IMR-90 (cell line): ENCODE measurements at regions of chr9 and their contacts with region 1.

Region 1: DNA sequence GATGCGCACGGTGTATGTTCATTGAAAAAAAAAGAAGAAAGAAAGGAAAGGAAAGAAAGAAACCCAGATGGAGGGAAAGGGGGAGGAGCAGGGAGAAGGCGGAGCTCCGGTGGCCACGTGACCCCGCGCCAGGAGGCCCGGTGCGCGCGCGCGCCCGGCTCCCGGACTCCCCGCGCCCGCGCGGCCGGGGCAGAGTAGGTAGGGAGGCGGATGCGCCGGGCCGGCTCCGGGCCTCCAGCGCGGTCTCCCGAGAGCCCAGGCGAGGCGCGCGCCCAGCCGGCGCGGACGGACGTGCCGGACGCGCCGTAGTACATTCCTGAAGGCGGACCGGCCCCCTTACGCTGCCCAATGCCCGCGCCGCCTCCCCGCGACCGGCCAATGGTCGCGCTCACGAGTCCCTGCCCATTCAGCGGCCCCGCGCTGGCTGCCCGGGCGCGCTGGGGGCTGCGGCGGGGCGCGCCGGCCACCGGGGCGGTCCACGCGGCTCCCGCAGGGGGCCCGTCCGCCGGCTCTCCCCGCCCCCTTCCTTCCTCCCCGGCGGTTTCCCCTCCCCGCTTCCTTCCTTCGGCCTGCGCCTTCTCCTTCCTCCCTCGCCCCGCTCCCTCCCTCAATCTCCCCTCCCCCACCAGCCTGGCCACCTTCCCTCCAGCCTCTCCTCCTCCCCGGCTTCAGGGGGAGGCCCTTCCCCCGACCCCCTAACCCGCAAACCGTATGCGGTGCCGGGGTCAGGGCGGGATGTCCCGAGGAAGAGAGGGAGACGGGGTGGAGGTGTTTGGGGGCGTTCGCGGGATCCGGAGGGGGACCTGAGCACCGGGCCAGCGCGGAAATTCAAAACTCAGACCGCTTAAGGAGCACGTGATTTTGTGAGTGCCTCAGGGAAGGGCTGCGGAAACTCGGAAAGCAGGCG is 5.8 kb downstream of the PTCH1 start:
- DNase-seq: peak; percentile 97
- ATAC-seq: peak; percentile 77
- H3K4me3 ChIP-seq: peak overlapping the region; percentile 84
- H3K27ac ChIP-seq: peak overlapping the region; percentile 99
- H3K4me1 ChIP-seq: peaks cover 4% of the 10 kb centered on the region
- H3K27me3 ChIP-seq: no peaks in the 10 kb centered on the region; the same call in 1 of the 2 replicates
- CTCF ChIP-seq: no peak
- POLR2A ChIP-seq: peak; percentile 28; the same call in 1 of the 2 replicates
- RAD21 ChIP-seq: no peak

Region 2: DNA sequence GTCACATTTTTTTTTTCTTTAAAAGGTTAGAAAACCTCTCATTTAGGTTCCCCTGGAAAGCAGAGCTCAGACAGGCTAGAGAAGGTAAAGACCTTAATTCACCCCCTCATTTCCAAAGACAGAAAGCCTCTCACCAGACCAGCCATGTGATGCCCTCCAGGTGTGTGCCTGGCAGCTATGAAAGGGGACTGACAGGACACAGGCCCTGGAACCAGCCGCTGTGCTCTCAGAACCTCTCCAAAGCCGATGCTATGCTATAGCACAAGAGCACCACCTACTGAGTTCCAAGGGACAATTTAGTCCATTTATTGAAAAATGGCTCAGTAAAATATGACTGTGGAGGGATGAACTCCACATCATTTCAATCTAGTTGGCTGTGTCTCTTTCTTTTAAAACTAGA is 242.3 kb before region 1 on chr9:
- CTCF ChIA-PET with region 1: no interaction called
- POLR2A ChIA-PET with region 1: interaction called, 3 read pairs
- dilution Hi-C with region 1: no loop called
- in situ Hi-C with region 1: no loop called
- intact Hi-C with region 1: loop called (anchors 1 kb)
- DNase-seq: peak; percentile 41
- ATAC-seq: peak; percentile 69
- H3K4me3 ChIP-seq: no peak overlapping the region
- H3K27ac ChIP-seq: no peak overlapping the region
- H3K4me1 ChIP-seq: peaks cover 4% of the 10 kb centered on the region; the same call in 1 of the 2 replicates
- H3K27me3 ChIP-seq: no peaks in the 10 kb centered on the region
- CTCF ChIP-seq: peak; percentile 49
- POLR2A ChIP-seq: no peak
- RAD21 ChIP-seq: peak; percentile 50

Region 3: GRCh38 chr9:95383185-95383673 is 127.7 kb before region 1 on chr9:
- CTCF ChIA-PET with region 1: interaction called, 3 read pairs
- POLR2A ChIA-PET with region 1: no interaction called
- dilution Hi-C with region 1: no loop called
- in situ Hi-C with region 1: no loop called
- intact Hi-C with region 1: loop called (anchors 5 kb)
- DNase-seq: peak; percentile 85
- ATAC-seq: peak; percentile 77
- H3K4me3 ChIP-seq: no peak overlapping the region
- H3K27ac ChIP-seq: peak overlapping the region; percentile 74
- H3K4me1 ChIP-seq: peaks cover 17% of the 10 kb centered on the region
- H3K27me3 ChIP-seq: no peaks in the 10 kb centered on the region
- CTCF ChIP-seq: no peak
- POLR2A ChIP-seq: no peak
- RAD21 ChIP-seq: no peak

Region 4: GRCh38 chr9:95726756-95727155 is 215.8 kb after region 1 on chr9:
- CTCF ChIA-PET with region 1: no interaction called
- POLR2A ChIA-PET with region 1: interaction called, 20 read pairs
- dilution Hi-C with region 1: no loop called
- in situ Hi-C with region 1: no loop called
- intact Hi-C with region 1: loop called (anchors 5 kb)
- DNase-seq: peak; percentile 59
- ATAC-seq: peak; percentile 89
- H3K4me3 ChIP-seq: no peak overlapping the region
- H3K27ac ChIP-seq: no peak overlapping the region
- H3K4me1 ChIP-seq: peaks cover 2% of the 10 kb centered on the region; the same call in 1 of the 2 replicates
- H3K27me3 ChIP-seq: peaks cover 15% of the 10 kb centered on the region
- CTCF ChIP-seq: peak; percentile 69
- POLR2A ChIP-seq: no peak
- RAD21 ChIP-seq: peak; percentile 74

Region 5: GRCh38 chr9:95981761-95982390 is 470.9 kb after region 1 on chr9:
- CTCF ChIA-PET with region 1: no interaction called
- POLR2A ChIA-PET with region 1: no interaction called
- dilution Hi-C with region 1: no loop called
- in situ Hi-C with region 1: no loop called
- intact Hi-C with region 1: no loop called
- DNase-seq: no peak
- ATAC-seq: peak; percentile 17; the same call in 1 of the 2 replicates
- H3K4me3 ChIP-seq: no peak overlapping the region
- H3K27ac ChIP-seq: no peak overlapping the region
- H3K4me1 ChIP-seq: peaks cover 4% of the 10 kb centered on the region
- H3K27me3 ChIP-seq: no peaks in the 10 kb centered on the region
- CTCF ChIP-seq: no peak
- POLR2A ChIP-seq: no peak
- RAD21 ChIP-seq: no peak

Region 6: GRCh38 chr9:96061293-96061987 is 550.5 kb after region 1 on chr9:
- CTCF ChIA-PET with region 1: no interaction called
- POLR2A ChIA-PET with region 1: no interaction called
- dilution Hi-C with region 1: no loop called
- in situ Hi-C with region 1: no loop called
- intact Hi-C with region 1: loop called (anchors 2 kb)
- DNase-seq: peak; percentile 41
- ATAC-seq: peak; percentile 87
- H3K4me3 ChIP-seq: no peak overlapping the region
- H3K27ac ChIP-seq: no peak overlapping the region
- H3K4me1 ChIP-seq: peaks cover 2% of the 10 kb centered on the region; the same call in 1 of the 2 replicates
- H3K27me3 ChIP-seq: peaks cover 5% of the 10 kb centered on the region; the same call in 1 of the 2 replicates
- CTCF ChIP-seq: peak; percentile 49
- POLR2A ChIP-seq: no peak
- RAD21 ChIP-seq: peak; percentile 60